Activated CD4-positive, alpha-beta T cell treated with anti-CD3 and anti-CD28 coated beads for 36 hours (primary cell): ENCODE measurements at regions of chr7 and their contacts with region 1.

Region 1: DNA sequence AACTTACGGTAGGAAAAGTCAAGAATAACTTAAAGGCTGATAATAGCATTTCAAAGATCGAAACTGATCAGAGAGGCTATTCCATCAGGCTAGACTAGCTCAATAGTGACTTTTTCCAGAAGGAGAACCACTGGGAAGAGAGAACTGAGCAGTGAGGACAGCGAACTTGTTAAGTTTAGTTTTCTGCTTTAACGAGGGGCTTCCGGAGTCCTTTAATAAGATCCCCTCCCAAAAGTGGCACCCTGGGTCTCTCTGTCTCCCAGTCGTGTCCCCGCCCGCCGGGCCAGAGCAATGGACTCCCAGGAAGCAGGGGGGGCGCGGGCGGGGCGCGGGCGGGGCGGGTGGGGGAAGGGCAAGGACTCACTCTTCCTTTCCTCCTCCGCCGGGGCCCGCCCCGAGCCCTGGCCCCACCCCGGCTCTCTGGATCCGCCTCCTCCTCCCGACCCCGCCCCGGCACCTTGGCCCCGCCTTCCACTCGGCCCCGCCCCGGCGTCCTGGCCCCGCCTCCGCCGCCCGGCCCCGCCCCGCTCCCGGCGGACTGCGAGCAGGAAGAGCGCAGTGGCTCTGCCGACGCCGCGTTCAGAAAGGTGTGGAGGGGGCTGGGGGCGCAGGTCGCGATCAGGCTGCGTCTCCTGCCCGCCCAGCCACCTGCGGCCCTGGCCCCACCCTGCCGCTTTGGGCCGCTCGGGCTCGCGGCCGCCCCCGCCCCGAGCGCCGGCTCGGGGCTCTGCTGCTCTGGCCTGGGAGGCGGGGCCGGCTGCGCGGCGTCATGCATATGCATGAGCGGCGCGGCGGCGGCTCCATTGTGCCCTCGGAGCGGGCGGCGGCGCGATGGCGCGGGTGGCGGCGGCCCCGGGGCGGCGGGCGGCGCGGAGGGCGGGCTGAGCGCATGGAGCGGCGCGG is at the start of gene ZMIZ2:
- DNase-seq: peak; percentile 97
- ATAC-seq: peak; percentile 87
- H3K4me3 Mint-ChIP-seq: peak within 1 kb of the TSS; percentile 78
- H3K27ac Mint-ChIP-seq: peak within 1 kb of the TSS; percentile 97
- H3K4me1 Mint-ChIP-seq: peaks cover 31% of the 10 kb centered on the region
- H3K27me3 Mint-ChIP-seq: no peaks in the 10 kb centered on the region
- total RNA-seq, gene ZMIZ2: 82.8 to 106 TPM

Region 2: GRCh38 chr7:44200647-44201461 is 547.4 kb before region 1 on chr7 and contains the start of gene YKT6:
- CTCF ChIA-PET with region 1: no interaction called
- POLR2A ChIA-PET with region 1: no interaction called
- intact Hi-C with region 1: loop called in 1 of 2 experiments (anchors 2 kb)
- DNase-seq: peak; percentile 97
- ATAC-seq: peak; percentile 99
- H3K4me3 Mint-ChIP-seq: peak within 1 kb of the TSS; percentile 80
- H3K27ac Mint-ChIP-seq: peak within 1 kb of the TSS; percentile 75
- H3K4me1 Mint-ChIP-seq: peaks cover 26% of the 10 kb centered on the region
- H3K27me3 Mint-ChIP-seq: peaks cover 6% of the 10 kb centered on the region
- total RNA-seq, gene YKT6: 51.0 to 51.3 TPM

Region 3: GRCh38 chr7:44606450-44607254 is 141.6 kb before region 1 on chr7 and contains the start of gene OGDH:
- CTCF ChIA-PET with region 1: interaction called, 3 read pairs
- POLR2A ChIA-PET with region 1: interaction called, 7 read pairs
- intact Hi-C with region 1: loop called in 1 of 2 experiments (anchors 1 kb)
- DNase-seq: peak; percentile 100
- ATAC-seq: peak; percentile 98
- H3K4me3 Mint-ChIP-seq: peak within 1 kb of the TSS; percentile 92
- H3K27ac Mint-ChIP-seq: peak within 1 kb of the TSS; percentile 97
- H3K4me1 Mint-ChIP-seq: peaks cover 33% of the 10 kb centered on the region
- H3K27me3 Mint-ChIP-seq: no peaks in the 10 kb centered on the region
- total RNA-seq, gene OGDH: 80.3 to 90.1 TPM

Region 4: DNA sequence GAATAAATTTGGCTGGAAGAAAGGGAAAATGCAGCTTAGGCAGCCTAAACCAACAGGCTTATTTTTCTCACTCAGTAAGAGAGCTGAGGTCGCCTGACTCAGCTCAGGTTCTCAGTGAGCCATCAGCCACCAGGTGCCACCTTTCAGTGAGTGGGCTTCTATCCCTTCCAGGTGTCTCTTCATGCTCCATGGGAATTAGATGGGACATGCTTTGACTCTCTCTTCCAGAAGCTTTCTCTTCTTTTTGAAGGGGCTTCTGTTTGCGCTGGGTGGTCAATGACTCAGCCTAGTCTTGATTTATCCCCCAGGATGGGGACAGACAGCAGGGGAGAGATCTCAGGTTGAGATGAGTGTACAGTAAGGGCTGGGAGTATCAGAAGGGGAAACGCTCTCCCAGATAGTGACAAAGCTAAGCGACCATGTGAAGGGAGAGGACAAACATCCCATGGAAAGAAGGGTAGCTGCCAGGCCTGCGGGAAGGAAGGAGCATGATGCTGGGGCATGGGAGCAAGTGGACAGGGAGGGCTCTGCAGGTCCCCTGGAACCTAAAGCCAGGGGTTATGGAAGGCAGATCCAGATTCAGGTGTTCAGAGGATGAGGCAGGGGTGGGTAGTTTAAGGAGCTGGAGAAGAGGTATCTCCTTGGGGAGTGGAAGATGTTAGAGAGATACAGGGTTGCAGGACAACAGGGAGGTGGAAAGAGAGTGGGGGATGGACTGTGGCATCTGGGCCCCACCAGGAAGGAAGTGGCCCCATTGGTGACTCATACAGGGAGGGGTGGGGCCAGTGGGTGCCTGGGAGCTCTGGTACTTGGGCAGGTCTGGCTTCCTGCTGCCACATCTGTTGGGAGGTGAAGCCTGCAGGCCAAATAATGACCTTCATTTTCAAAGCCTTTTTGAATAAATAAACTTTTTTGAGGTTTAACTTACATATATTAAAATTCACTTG is 109.4 kb before region 1 on chr7:
- CTCF ChIA-PET with region 1: interaction called, 5 read pairs
- POLR2A ChIA-PET with region 1: no interaction called
- intact Hi-C with region 1: loop called (anchors 1 to 2 kb)
- DNase-seq: peak; percentile 90
- ATAC-seq: peak; percentile 71
- H3K4me3 Mint-ChIP-seq: peak overlapping the region; percentile 73
- H3K27ac Mint-ChIP-seq: peak overlapping the region; percentile 100
- H3K4me1 Mint-ChIP-seq: peaks cover 75% of the 10 kb centered on the region
- H3K27me3 Mint-ChIP-seq: no peaks in the 10 kb centered on the region

Region 5: DNA sequence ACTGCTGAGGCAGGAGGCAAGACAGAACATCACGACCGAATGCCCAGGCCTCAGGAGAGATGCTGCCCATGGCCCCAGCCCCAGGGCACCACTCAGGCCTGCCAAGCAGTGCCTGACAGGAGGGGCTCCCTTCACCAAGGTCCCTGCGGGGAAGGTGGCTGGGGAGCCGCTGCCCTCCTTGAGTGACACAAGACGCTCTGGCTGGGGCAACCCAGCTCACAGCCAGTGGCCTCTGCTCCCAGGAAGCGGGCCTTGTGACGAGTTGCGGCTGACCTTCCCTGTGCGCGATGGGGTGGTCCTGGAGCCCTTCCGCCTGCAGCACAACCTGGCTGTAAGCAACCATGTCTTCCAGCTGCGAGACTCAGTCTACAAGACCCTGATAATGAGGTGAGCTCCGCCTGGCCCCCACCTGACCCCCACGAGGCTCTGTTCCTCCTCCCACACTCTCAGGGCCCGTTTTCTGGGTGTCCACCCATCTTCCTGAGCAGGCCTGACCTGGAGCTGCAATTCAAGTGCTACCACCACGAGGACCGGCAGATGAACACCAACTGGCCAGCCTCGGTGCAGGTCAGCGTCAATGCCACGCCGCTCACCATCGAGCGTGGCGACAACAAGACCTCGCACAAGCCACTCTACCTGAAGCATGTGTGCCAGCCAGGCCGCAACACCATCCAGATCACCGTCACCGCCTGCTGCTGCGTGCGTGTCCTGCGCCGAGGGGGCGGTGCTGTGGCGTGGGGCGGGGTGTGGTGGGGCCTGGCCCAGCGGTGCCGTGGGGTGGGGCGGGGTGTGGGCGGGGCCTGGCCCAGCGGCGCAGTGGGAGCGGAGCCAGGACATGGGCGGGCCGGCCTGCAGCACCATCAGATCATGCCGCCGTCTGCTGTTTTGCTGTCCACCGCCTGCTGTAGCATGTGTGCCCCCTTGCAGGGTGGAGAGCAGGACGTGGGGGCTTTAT is 13.2 kb after region 1 on chr7:
- CTCF ChIA-PET with region 1: no interaction called
- POLR2A ChIA-PET with region 1: no interaction called
- intact Hi-C with region 1: no loop called
- DNase-seq: no peak
- ATAC-seq: no peak
- H3K4me3 Mint-ChIP-seq: no peak overlapping the region
- H3K27ac Mint-ChIP-seq: no peak overlapping the region
- H3K4me1 Mint-ChIP-seq: no peaks in the 10 kb centered on the region
- H3K27me3 Mint-ChIP-seq: no peaks in the 10 kb centered on the region

Region 6: DNA sequence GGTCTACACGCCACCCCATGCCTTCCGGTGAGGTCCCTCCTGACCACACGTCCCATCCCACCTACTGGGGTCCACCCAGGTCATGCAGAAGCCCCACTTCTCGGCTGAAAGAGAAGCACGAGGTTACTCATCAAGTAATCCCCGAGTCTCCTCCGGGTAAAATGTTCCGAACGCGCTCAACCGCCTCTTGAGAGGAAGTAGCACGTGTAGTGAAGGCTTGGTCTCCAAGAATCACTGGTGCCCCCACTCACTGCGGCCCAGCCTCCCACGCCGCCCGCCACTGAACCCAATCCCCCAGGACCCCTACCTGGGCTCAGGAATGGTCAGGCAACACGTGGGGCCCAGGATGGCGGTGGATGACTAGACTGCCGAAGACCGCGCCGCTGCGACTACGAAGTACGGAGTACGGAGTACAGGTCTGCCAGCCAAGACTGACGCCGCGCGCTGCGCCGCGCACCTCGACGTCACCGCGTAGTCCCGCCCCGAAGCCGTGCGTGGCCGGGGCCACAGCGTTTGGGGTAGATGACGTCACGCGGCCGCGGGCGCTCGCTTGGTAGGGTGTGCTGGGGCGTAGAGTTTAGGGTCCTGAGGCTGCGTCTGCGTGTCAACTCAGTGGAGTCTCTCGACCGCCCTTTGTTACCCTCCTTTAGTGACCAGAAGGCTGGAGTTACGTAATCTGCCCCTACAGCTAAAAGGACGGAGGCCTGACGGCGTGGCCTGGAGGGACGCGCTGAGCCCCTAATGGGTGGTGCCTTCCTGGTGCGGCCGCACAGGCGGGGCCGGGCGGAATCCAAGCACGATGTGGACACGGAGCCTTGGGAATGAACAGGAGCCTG is 238.1 kb after region 1 on chr7:
- CTCF ChIA-PET with region 1: no interaction called
- POLR2A ChIA-PET with region 1: no interaction called
- intact Hi-C with region 1: loop called in 1 of 2 experiments (anchors 1 kb)
- DNase-seq: peak; percentile 99
- ATAC-seq: peak; percentile 90
- H3K4me3 Mint-ChIP-seq: peak overlapping the region; percentile 99
- H3K27ac Mint-ChIP-seq: peak overlapping the region; percentile 99
- H3K4me1 Mint-ChIP-seq: peaks cover 52% of the 10 kb centered on the region
- H3K27me3 Mint-ChIP-seq: no peaks in the 10 kb centered on the region